Psoas muscle (tissue), 8 donors: ENCODE measurements at regions of chr1 and their contacts with region 1.

Region 1: DNA sequence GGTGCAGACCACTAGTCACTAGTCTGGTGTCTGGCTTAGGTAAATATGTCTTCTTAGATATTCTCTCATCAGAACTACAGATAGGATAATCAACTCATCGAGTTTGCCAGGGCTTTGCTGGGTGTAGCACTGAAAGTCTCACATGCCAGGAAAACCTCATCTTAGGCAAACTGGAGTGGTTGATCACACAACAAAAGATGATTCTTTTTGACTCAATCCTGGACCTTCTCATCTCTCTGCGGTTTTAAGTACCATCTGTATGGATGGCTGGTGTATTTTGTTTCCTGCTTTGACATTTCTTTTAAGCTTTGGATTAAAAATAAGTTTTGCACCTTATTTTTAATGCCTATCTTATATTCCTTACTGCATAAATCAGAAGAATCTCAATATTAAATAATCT is 11.3 kb downstream of the GBP2 start:
- DNase-seq: no peak
- ATAC-seq: no peak
- H3K4me3 ChIP-seq: no peak overlapping the region
- H3K27ac ChIP-seq: no peak overlapping the region
- H3K4me1 ChIP-seq: no peaks in the 10 kb centered on the region
- H3K27me3 ChIP-seq: no peaks in the 10 kb centered on the region
- CTCF ChIP-seq: no peak

Region 2: GRCh38 chr1:89065079-89065868 is 49.4 kb before region 1 on chr1 and contains the start of gene GBP1:
- intact Hi-C with region 1: loop called in 1 of 2 experiments (anchors 5 kb)
- DNase-seq: no peak
- ATAC-seq: peak; percentile 34 to 83 (median 54)
- H3K4me3 ChIP-seq: peak within 1 kb of the TSS; percentile 59
- H3K27ac ChIP-seq: peak within 1 kb of the TSS; percentile 66
- H3K4me1 ChIP-seq: peaks cover 4% of the 10 kb centered on the region
- H3K27me3 ChIP-seq: no peaks in the 10 kb centered on the region
- CTCF ChIP-seq: no peak
- total RNA-seq, gene GBP1: 2.1 to 4.1 (median 3.8) TPM

Region 3: GRCh38 chr1:89089962-89090361 is 24.7 kb before region 1 on chr1:
- intact Hi-C with region 1: no loop called
- DNase-seq: no peak
- ATAC-seq: no peak
- H3K4me3 ChIP-seq: no peak overlapping the region
- H3K27ac ChIP-seq: no peak overlapping the region
- H3K4me1 ChIP-seq: no peaks in the 10 kb centered on the region
- H3K27me3 ChIP-seq: peaks cover 0 to 3% (median 0%) of the 10 kb centered on the region in 3 donors
- CTCF ChIP-seq: no peak